Activated CD4-positive, alpha-beta memory T cell treated with anti-CD3 and anti-CD28 coated beads, Interleukin-2, amount 10 ng/mL, durations not matched to agents 7 days and 5 days (primary cell): ENCODE measurements at regions of chr10 and their contacts with region 1.

Region 1: GRCh38 chr10:21495752-21496342 is 29.6 kb downstream of the SKIDA1 start:
- DNase-seq: peak; percentile 87
- H3K4me3 Mint-ChIP-seq: peak overlapping the region; percentile 70
- H3K27ac Mint-ChIP-seq: no peak overlapping the region
- H3K4me1 Mint-ChIP-seq: peaks cover 24% of the 10 kb centered on the region
- H3K27me3 Mint-ChIP-seq: peaks cover 65% of the 10 kb centered on the region

Region 2: DNA sequence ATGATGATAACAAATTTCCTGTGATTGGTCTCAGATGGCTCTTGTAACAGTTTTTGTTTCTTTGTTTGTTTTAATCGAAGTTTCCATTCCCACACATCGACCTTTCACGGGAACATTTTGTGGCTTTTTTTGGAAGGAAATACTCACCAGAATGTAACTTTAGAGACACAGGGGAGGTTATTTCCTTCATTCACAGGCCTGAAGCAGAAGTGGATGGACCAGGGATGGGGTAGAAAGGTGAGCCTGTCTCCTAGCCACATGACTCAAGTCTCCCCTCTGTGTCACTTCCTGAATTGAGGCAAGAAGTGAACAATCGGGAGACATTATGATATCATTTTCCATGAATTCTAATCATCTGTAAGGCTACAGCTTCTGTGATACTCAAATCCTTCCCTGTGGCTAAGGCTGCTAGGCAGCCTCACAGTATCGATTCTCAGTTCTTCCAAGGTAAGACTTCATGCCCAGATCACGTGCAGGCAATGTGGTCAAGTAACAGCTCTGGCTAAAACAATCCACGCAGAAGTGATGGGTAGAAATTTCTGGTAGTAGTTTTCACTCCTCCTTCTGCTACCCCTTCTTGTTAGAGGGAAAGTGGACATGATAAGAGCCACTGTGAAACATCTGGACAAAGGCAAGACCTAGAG is 394.9 kb before region 1 on chr10:
- CTCF ChIA-PET with region 1: no interaction called
- POLR2A ChIA-PET with region 1: no interaction called
- DNase-seq: no peak
- H3K4me3 Mint-ChIP-seq: no peak overlapping the region
- H3K27ac Mint-ChIP-seq: no peak overlapping the region
- H3K4me1 Mint-ChIP-seq: no peaks in the 10 kb centered on the region
- H3K27me3 Mint-ChIP-seq: no peaks in the 10 kb centered on the region

Region 3: GRCh38 chr10:21516242-21517131 is 20.6 kb after region 1 on chr10:
- CTCF ChIA-PET with region 1: interaction called, 39 read pairs
- POLR2A ChIA-PET with region 1: interaction called, 5 read pairs
- DNase-seq: peak; percentile 57
- H3K4me3 Mint-ChIP-seq: peak overlapping the region; percentile 80
- H3K27ac Mint-ChIP-seq: no peak overlapping the region
- H3K4me1 Mint-ChIP-seq: peaks cover 46% of the 10 kb centered on the region
- H3K27me3 Mint-ChIP-seq: peaks cover 81% of the 10 kb centered on the region

Region 4: DNA sequence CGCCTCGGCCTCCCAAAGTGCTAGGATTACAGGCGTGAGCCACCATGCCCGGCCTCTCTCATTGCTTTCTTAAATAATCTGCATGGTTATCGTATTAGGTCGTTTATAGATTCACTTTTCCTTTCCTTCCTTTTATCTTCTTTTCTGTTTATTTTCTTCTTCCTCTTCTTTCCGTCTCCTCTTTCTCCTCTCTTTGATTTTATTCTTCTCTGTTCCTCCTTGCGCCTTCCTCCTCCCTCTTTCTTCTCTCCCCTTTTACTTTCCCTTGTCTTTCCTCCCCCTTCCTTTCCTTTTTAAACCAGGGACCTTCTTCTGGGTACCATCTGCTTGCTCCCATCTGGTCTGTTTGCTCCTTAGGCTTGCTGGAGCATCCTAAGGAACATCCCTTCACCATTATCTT is 56.8 kb after region 1 on chr10:
- CTCF ChIA-PET with region 1: interaction called, 10 read pairs
- POLR2A ChIA-PET with region 1: no interaction called
- DNase-seq: no peak
- H3K4me3 Mint-ChIP-seq: no peak overlapping the region
- H3K27ac Mint-ChIP-seq: no peak overlapping the region
- H3K4me1 Mint-ChIP-seq: peaks cover 9% of the 10 kb centered on the region
- H3K27me3 Mint-ChIP-seq: no peaks in the 10 kb centered on the region

Region 5: DNA sequence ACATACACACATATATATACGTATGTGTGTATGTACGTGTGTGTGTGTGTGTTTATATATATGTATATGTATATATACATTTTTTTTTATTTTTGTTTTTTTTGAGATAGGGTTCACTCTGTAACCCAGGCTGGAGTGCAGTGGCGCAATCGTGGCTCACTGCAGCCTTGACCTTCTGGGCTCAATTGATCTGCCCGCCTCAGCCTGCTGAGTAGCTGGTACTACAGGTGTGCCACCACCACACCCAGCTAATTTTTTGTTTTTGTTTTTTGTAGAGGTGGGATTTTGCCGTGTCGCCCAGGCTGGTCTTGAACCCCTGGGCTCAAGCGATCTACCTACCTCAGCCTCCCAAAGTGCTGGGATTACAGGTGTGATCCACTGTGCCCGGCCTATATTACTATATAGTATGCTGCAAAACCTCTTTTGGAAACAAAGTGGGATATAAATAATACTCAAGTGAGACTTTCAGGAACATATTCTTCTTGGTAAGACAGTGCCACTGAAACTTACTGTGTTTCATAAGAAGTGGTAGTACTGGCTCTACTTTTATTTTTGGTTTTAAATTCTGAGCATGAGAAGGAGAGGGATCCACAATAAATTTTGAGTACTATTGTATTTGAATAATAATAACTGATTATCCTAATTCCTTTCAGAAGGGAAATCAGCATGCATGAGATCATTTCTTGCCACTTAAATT is 89.1 kb after region 1 on chr10:
- CTCF ChIA-PET with region 1: no interaction called
- POLR2A ChIA-PET with region 1: no interaction called
- DNase-seq: no peak
- H3K4me3 Mint-ChIP-seq: no peak overlapping the region
- H3K27ac Mint-ChIP-seq: no peak overlapping the region
- H3K4me1 Mint-ChIP-seq: peaks cover 45% of the 10 kb centered on the region
- H3K27me3 Mint-ChIP-seq: no peaks in the 10 kb centered on the region

Region 6: DNA sequence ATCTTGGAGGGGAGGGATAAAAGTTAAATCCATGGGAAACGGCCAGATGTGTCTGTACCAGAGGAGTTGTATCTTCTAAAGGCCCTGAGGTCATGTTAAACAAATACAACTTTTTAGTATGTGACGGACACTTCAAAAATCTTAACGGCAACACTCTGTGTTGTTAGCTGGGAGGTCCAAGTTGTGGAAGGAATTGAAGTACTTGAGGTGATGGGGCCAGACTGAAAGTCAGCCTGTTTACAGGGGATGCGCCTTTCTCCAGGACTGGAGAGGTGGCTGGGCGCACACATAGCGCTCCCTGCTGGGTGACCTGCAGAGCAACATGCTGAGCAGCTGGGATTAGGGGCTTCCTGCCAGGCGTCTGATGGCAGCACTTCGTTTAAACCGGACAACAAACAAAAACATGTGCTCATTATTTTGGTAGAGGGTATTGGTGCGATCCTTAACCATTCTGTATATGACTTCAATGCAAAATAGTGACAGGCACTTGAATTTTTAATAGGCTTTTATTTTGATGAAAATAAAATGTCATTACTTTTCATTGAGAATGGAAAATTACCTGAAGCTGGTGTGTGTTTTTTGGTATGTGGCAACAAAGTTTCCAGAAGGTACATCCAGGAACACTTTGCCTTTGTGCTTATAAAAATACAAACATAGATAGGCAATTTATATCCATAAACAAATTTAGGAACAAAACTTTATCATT is 236.4 kb after region 1 on chr10:
- CTCF ChIA-PET with region 1: interaction called, 10 read pairs
- POLR2A ChIA-PET with region 1: no interaction called
- DNase-seq: peak; percentile 48
- H3K4me3 Mint-ChIP-seq: no peak overlapping the region
- H3K27ac Mint-ChIP-seq: no peak overlapping the region
- H3K4me1 Mint-ChIP-seq: peaks cover 27% of the 10 kb centered on the region
- H3K27me3 Mint-ChIP-seq: no peaks in the 10 kb centered on the region

Region 7: GRCh38 chr10:21791276-21791675 is 295.4 kb after region 1 on chr10:
- CTCF ChIA-PET with region 1: no interaction called
- POLR2A ChIA-PET with region 1: no interaction called
- DNase-seq: no peak
- H3K4me3 Mint-ChIP-seq: no peak overlapping the region
- H3K27ac Mint-ChIP-seq: no peak overlapping the region
- H3K4me1 Mint-ChIP-seq: peaks cover 11% of the 10 kb centered on the region
- H3K27me3 Mint-ChIP-seq: no peaks in the 10 kb centered on the region

Region 8: DNA sequence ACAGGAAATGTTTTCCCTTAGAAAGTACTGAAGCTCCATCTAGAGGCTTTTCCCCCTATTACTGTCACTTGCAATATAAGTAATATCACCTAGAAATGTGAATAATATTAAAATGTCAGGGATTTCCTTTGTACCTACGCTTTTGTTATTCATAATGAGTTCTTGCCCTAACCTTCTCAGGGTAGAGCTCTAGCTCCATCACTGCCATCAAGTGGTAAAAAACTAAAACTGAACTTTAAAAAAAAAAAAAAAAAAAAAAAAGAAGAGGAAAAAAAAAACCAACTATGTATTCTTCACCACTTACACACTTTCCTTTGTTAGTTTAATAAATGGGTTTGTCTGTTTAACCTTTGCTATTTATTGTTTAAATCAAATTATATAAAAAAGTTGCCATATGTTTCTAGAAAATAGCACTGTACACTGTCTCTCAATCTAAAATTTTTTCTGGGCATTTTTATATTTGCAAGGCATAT is 457.8 kb after region 1 on chr10:
- CTCF ChIA-PET with region 1: interaction called, 12 read pairs
- POLR2A ChIA-PET with region 1: no interaction called
- DNase-seq: no peak
- H3K4me3 Mint-ChIP-seq: no peak overlapping the region
- H3K27ac Mint-ChIP-seq: no peak overlapping the region
- H3K4me1 Mint-ChIP-seq: peaks cover 2% of the 10 kb centered on the region
- H3K27me3 Mint-ChIP-seq: no peaks in the 10 kb centered on the region